Prostate gland (tissue), 2 donors: ENCODE measurements at regions of chr17 and their contacts with region 1.

Region 1: GRCh38 chr17:15409721-15410250 is 57.6 kb downstream of the CDRT4 start:
- DNase-seq: no peak
- H3K4me3 ChIP-seq: no peak overlapping the region
- H3K27ac ChIP-seq: peak overlapping the region in 1 of 2 donors; percentile 19
- H3K4me1 ChIP-seq: no peaks in the 10 kb centered on the region
- H3K27me3 ChIP-seq: no peaks in the 10 kb centered on the region
- CTCF ChIP-seq: no peak
- POLR2A ChIP-seq: no peak

Region 2: DNA sequence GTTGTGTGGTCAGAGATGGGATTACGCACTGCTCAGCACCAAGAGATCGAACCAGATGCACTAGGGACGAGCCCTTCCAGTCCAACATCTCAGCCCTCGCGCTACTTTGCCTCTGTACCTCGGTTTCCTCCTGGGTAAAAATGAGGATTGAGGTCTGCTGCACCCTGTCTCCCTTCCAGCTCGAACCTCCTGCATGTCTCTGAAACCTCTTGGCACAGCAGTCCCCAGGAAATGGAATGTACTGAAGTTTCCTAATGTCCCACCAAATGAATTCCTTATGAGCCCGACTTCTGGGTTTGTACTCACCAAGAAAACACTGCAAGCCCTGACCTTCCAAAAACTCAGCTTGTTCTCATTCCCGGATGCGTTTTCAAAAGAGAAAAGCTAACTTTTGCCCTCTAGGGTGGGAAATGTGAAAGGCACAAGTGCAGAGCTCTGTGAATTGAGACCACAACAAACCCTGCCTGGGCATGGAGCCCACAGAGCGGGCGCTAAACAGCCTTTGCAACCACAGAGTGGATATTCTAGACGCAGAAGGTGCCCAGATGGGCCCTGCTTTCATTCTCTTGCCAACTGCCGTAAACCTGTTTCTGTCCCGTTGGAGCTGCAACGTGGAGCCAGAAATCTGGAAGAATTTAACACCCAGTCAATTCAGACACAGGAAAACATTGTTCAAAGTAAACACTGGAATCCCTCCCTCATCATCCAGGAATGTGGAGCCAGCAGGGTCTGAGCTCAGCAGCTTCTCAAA is 47.4 kb after region 1 on chr17:
- intact Hi-C with region 1: loop called (anchors 1 kb)
- DNase-seq: no peak
- H3K4me3 ChIP-seq: no peak overlapping the region
- H3K27ac ChIP-seq: peak overlapping the region; percentile 42 to 47
- H3K4me1 ChIP-seq: peaks cover 5% of the 10 kb centered on the region
- H3K27me3 ChIP-seq: no peaks in the 10 kb centered on the region
- CTCF ChIP-seq: peak in 1 of 4 experiments; percentile 31
- POLR2A ChIP-seq: no peak